CD4-positive, alpha-beta T cell (primary cell): ENCODE measurements at regions of chr4 and their contacts with region 1.

Region 1: GRCh38 chr4:47698837-47699236 is 139.0 kb downstream of the CORIN start:
- DNase-seq: no peak
- ATAC-seq: no peak
- H3K4me3 ChIP-seq: no peak overlapping the region
- H3K4me3 Mint-ChIP-seq: no peak overlapping the region
- H3K27ac ChIP-seq: no peak overlapping the region
- H3K27ac Mint-ChIP-seq: no peak overlapping the region
- H3K4me1 ChIP-seq: no peaks in the 10 kb centered on the region
- H3K4me1 Mint-ChIP-seq: no peaks in the 10 kb centered on the region
- H3K27me3 ChIP-seq: peaks cover 0 to 2% of the 10 kb centered on the region in 2 experiments
- H3K27me3 Mint-ChIP-seq: peaks cover 37% of the 10 kb centered on the region
- CTCF ChIP-seq: no peak

Region 2: GRCh38 chr4:47054130-47054529 is 644.7 kb before region 1 on chr4:
- CTCF ChIA-PET with region 1: no interaction called
- POLR2A ChIA-PET with region 1: no interaction called
- intact Hi-C with region 1: no loop called
- DNase-seq: no peak
- ATAC-seq: no peak
- H3K4me3 ChIP-seq: no peak overlapping the region
- H3K4me3 Mint-ChIP-seq: no peak overlapping the region
- H3K27ac ChIP-seq: no peak overlapping the region
- H3K27ac Mint-ChIP-seq: no peak overlapping the region
- H3K4me1 ChIP-seq: no peaks in the 10 kb centered on the region
- H3K4me1 Mint-ChIP-seq: no peaks in the 10 kb centered on the region
- H3K27me3 ChIP-seq: no peaks in the 10 kb centered on the region
- H3K27me3 Mint-ChIP-seq: peaks cover 42% of the 10 kb centered on the region
- CTCF ChIP-seq: no peak

Region 3: GRCh38 chr4:47442980-47443379 is 255.9 kb before region 1 on chr4:
- CTCF ChIA-PET with region 1: no interaction called
- POLR2A ChIA-PET with region 1: no interaction called
- intact Hi-C with region 1: no loop called
- DNase-seq: peak in 2 of 14 experiments; percentile 19 to 22
- ATAC-seq: no peak
- H3K4me3 ChIP-seq: no peak overlapping the region
- H3K4me3 Mint-ChIP-seq: no peak overlapping the region
- H3K27ac ChIP-seq: no peak overlapping the region
- H3K27ac Mint-ChIP-seq: no peak overlapping the region
- H3K4me1 ChIP-seq: no peaks in the 10 kb centered on the region
- H3K4me1 Mint-ChIP-seq: peaks cover 10% of the 10 kb centered on the region
- H3K27me3 ChIP-seq: no peaks in the 10 kb centered on the region
- H3K27me3 Mint-ChIP-seq: no peaks in the 10 kb centered on the region
- CTCF ChIP-seq: no peak

Region 4: DNA sequence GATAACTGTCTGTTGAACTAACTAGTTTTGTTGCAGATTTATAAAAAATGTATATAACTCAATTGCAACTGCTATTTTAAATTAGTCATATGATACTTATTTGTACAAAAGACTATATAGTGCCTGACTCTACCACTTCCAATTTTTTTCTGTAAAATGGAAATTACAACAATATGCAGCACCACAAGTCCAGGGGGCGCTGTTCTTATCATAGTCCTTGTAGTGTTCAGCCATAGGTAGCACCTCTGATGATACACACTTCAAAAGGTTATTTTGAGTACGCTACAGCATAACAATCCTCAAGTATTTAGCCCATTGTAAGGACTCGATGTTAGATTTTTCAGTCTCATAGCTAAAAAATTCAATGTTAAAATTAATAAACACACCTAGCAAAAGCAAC is 35.9 kb before region 1 on chr4:
- CTCF ChIA-PET with region 1: no interaction called
- POLR2A ChIA-PET with region 1: no interaction called
- intact Hi-C with region 1: no loop called
- DNase-seq: peak in 3 of 14 experiments; percentile 15 to 20 (median 20)
- ATAC-seq: no peak
- H3K4me3 ChIP-seq: no peak overlapping the region
- H3K4me3 Mint-ChIP-seq: no peak overlapping the region
- H3K27ac ChIP-seq: no peak overlapping the region
- H3K27ac Mint-ChIP-seq: no peak overlapping the region
- H3K4me1 ChIP-seq: no peaks in the 10 kb centered on the region
- H3K4me1 Mint-ChIP-seq: no peaks in the 10 kb centered on the region
- H3K27me3 ChIP-seq: peaks cover 3 to 4% of the 10 kb centered on the region in 2 experiments
- H3K27me3 Mint-ChIP-seq: peaks cover 8% of the 10 kb centered on the region
- CTCF ChIP-seq: no peak

Region 5: GRCh38 chr4:47836641-47837093 is 137.8 kb after region 1 on chr4:
- CTCF ChIA-PET with region 1: no interaction called
- POLR2A ChIA-PET with region 1: no interaction called
- intact Hi-C with region 1: loop called in 1 of 2 experiments (anchors 5 kb)
- DNase-seq: peak; percentile 21 to 68 (median 45)
- ATAC-seq: peak; percentile 68
- H3K4me3 ChIP-seq: peak overlapping the region; percentile 74
- H3K4me3 Mint-ChIP-seq: peak overlapping the region; percentile 91
- H3K27ac ChIP-seq: no peak overlapping the region
- H3K27ac Mint-ChIP-seq: peak overlapping the region; percentile 51
- H3K4me1 ChIP-seq: peaks cover 36% of the 10 kb centered on the region
- H3K4me1 Mint-ChIP-seq: peaks cover 37% of the 10 kb centered on the region
- H3K27me3 ChIP-seq: no peaks in the 10 kb centered on the region
- H3K27me3 Mint-ChIP-seq: peaks cover 9% of the 10 kb centered on the region
- CTCF ChIP-seq: peak; percentile 39